ENCODE measurements at regions of chr1 and their contacts with region 1.

Region 1: DNA sequence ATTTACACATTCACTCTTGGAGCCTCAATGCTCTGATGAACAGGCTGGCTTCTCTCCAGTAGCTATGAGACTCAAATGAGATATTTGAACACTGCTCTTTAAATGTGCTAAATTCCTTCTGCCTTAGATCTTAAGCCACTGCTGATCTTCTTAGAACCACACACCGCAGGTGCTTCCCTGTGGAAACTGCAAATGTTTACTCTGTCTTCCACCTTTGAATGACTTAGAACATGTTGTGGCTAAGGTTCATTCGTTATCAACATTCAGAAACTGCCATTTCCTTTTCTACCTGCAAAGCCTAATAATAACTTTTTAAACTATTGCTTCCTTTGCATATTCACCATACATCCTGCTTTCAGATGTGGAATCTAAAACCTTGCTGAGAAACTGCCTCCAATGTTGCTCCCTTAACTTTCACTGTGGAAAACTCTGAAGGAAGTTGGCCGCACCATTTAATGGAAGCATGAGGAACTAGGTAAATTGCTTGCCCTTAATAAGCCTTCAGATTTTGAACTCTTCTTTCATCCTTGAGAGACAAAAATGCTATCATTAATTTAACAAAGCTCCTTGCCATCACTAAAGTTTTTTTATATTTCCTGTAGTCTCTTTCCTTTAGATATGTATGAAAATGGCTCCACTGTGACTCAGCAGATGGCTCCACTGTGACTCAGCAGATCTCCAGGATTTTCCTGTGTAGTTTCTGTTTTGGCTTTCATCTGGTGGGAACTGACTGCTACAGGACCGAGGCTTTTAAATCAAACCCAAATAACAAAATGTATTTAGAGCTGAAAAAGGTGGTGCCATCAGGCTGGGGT is 143.8 kb downstream of the TNFSF18 start:
- DNase-seq: peak; percentile 90
- H3K4me3 ChIP-seq: no peak overlapping the region
- H3K27ac ChIP-seq: peak overlapping the region; percentile 71
- H3K4me1 ChIP-seq: peaks cover 64% of the 10 kb centered on the region
- H3K27me3 ChIP-seq: no peaks in the 10 kb centered on the region
- CTCF ChIP-seq: no peak

Region 2: GRCh38 chr1:172851077-172851476 is 55.9 kb before region 1 on chr1:
- CTCF ChIA-PET with region 1: no interaction called
- dilution Hi-C with region 1: no loop called
- in situ Hi-C with region 1: no loop called
- intact Hi-C with region 1: loop called (anchors 5 kb)
- DNase-seq: no peak
- H3K4me3 ChIP-seq: no peak overlapping the region
- H3K27ac ChIP-seq: no peak overlapping the region
- H3K4me1 ChIP-seq: no peaks in the 10 kb centered on the region
- H3K27me3 ChIP-seq: no peaks in the 10 kb centered on the region
- CTCF ChIP-seq: no peak

Region 3: DNA sequence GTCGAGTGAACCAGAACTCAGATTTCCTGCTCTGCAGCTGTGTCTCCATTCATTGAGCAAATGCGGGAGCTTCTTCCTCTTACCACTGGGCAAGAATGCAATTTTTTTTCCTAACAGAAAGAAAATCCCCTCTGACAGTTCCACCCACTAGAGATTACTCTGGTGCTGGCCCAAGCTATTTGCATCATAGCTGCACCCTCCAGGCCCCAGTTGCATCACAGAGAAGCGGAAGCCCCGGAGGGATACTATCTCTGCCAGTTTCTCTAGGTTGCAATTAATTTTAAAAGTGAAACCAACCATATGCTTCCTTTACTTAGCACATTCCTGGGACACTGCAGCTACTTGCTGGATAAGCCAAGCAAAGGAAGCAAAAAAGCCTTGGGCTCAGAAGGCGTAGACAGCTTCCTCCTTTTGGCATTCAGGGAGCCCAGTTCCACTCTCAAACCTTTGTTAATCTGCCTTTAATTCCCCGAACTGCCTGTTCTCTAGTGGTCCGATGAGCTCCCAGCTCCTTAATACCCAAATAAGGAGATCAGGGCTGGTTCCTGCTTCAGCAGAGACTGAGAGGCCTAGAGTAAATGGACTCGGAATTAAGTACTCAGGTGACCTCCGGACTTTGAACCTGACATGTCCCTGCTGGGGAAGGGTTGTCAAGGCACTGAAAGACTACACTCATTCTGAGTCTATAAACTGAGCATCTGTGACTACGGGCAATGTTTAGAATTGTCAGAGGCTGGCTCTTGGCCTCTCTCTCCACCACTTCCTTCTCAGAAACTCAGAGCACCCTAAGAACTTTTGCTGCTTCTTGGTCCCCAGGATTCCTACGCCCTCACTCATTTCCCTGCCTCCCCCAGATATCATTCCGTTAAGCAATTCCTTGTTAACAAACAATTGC is 216.2 kb after region 1 on chr1:
- CTCF ChIA-PET with region 1: no interaction called
- dilution Hi-C with region 1: no loop called
- in situ Hi-C with region 1: no loop called
- intact Hi-C with region 1: loop called (anchors 2 kb)
- DNase-seq: peak; percentile 91
- H3K4me3 ChIP-seq: peak overlapping the region; percentile 24 to 45 (median 25)
- H3K27ac ChIP-seq: peak overlapping the region; percentile 88
- H3K4me1 ChIP-seq: peaks cover 13% of the 10 kb centered on the region
- H3K27me3 ChIP-seq: no peaks in the 10 kb centered on the region
- CTCF ChIP-seq: no peak

Measured in mammary epithelial cell (primary cell).